Activated B cell treated with CpG ODN at 0.5 μM for 24 hours (primary cell): ENCODE measurements at regions of chr6 and their contacts with region 1.

Region 1: GRCh38 chr6:35731736-35732532 is 4.9 kb upstream of the ARMC12 start:
- DNase-seq: peak; percentile 93
- ATAC-seq: peak; percentile 69
- H3K4me3 Mint-ChIP-seq: peak overlapping the region; percentile 90
- H3K27ac Mint-ChIP-seq: peak overlapping the region; percentile 93
- H3K4me1 Mint-ChIP-seq: peaks cover 62% of the 10 kb centered on the region
- H3K27me3 Mint-ChIP-seq: no peaks in the 10 kb centered on the region
- CTCF ChIP-seq: no peak

Region 2: GRCh38 chr6:35071347-35071994 is 660.5 kb before region 1 on chr6:
- CTCF ChIA-PET with region 1: no interaction called
- POLR2A ChIA-PET with region 1: no interaction called
- intact Hi-C with region 1: no loop called
- DNase-seq: no peak
- ATAC-seq: no peak
- H3K4me3 Mint-ChIP-seq: no peak overlapping the region
- H3K27ac Mint-ChIP-seq: no peak overlapping the region
- H3K4me1 Mint-ChIP-seq: no peaks in the 10 kb centered on the region
- H3K27me3 Mint-ChIP-seq: no peaks in the 10 kb centered on the region
- CTCF ChIP-seq: no peak

Region 3: GRCh38 chr6:35297601-35298481 is 434.1 kb before region 1 on chr6 and contains the start of gene DEF6:
- CTCF ChIA-PET with region 1: interaction called, 4 read pairs
- POLR2A ChIA-PET with region 1: no interaction called
- intact Hi-C with region 1: loop called (anchors 1 kb)
- DNase-seq: peak; percentile 74
- ATAC-seq: peak; percentile 78
- H3K4me3 Mint-ChIP-seq: peak within 1 kb of the TSS; percentile 85
- H3K27ac Mint-ChIP-seq: peak within 1 kb of the TSS; percentile 97
- H3K4me1 Mint-ChIP-seq: peaks cover 56% of the 10 kb centered on the region
- H3K27me3 Mint-ChIP-seq: no peaks in the 10 kb centered on the region
- CTCF ChIP-seq: peak; percentile 42
- total RNA-seq, gene DEF6: 68.7 and 79.9 TPM in 2 replicates

Region 4: GRCh38 chr6:35468181-35468979 is 263.6 kb before region 1 on chr6 and contains the start of gene RPL10A:
- CTCF ChIA-PET with region 1: interaction called, 4 read pairs
- POLR2A ChIA-PET with region 1: interaction called, 7 read pairs
- intact Hi-C with region 1: loop called (anchors 2 kb)
- DNase-seq: peak; percentile 87
- ATAC-seq: peak; percentile 85
- H3K4me3 Mint-ChIP-seq: peak within 1 kb of the TSS; percentile 96
- H3K27ac Mint-ChIP-seq: peak within 1 kb of the TSS; percentile 98
- H3K4me1 Mint-ChIP-seq: peaks cover 45% of the 10 kb centered on the region
- H3K27me3 Mint-ChIP-seq: no peaks in the 10 kb centered on the region
- CTCF ChIP-seq: no peak
- total RNA-seq, gene RPL10A: 2,485 and 2,644 TPM in 2 replicates

Region 5: DNA sequence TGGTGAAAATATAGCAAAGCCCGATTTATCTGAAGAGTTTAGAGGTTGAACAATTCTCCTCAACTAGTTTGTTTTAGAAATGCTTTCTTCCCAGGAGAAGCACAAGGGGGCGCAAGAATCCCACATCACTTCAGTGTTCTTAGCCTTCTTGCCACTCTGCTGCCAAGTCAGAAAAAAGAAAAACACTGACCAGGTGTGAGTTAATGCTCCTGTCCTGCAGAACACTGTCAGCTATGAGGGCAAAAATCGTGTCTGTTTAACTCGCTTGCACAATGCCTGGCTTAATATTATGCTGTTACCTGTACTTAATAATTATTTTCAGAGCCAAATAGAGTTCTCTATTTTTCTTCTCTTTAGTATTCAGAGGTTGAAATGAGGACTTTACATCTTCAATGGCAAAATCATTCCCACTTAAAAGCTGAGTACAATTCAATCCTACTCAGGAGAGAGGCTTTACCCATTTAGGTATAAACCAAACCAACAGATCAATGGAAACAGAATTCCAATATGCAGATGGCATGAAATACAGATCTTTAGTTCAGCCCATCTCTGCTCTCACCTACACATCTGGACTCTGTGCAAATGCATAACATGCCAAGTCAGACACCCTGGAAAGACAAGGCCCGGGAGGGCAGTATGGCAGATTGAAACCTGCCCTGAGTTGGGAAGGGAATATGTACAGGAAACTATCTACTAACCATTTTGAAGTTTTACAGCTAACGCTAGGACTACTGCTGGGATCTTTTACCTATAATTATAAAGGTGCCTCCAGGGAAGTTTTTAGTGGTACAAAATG is 147.8 kb before region 1 on chr6:
- CTCF ChIA-PET with region 1: interaction called, 177 read pairs
- POLR2A ChIA-PET with region 1: no interaction called
- intact Hi-C with region 1: loop called (anchors 1 kb)
- DNase-seq: peak; percentile 31
- ATAC-seq: peak; percentile 68
- H3K4me3 Mint-ChIP-seq: no peak overlapping the region
- H3K27ac Mint-ChIP-seq: no peak overlapping the region
- H3K4me1 Mint-ChIP-seq: peaks cover 10% of the 10 kb centered on the region
- H3K27me3 Mint-ChIP-seq: no peaks in the 10 kb centered on the region
- CTCF ChIP-seq: peak; percentile 70

Region 6: DNA sequence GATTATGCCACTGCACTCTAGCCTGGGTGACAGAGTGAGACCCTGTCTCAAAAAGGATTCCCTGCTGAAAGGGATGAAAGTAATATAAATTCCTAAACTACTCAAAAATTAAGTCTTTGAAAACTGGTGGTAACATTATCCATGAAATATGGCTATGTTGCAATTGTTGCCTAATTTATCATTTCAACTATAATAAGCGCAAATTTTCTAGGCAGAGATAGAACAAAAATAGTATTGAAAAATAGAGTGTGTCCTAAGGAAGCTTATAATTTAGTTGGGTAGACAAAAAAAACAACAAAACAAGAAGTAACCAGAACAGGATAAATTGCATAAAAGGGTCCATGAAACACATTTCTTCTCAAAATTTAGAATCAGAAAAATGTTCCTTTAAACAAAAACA is 111.2 kb before region 1 on chr6:
- CTCF ChIA-PET with region 1: interaction called, 15 read pairs
- POLR2A ChIA-PET with region 1: no interaction called
- intact Hi-C with region 1: no loop called
- DNase-seq: no peak
- ATAC-seq: no peak
- H3K4me3 Mint-ChIP-seq: no peak overlapping the region
- H3K27ac Mint-ChIP-seq: no peak overlapping the region
- H3K4me1 Mint-ChIP-seq: no peaks in the 10 kb centered on the region
- H3K27me3 Mint-ChIP-seq: no peaks in the 10 kb centered on the region
- CTCF ChIP-seq: no peak

Region 7: DNA sequence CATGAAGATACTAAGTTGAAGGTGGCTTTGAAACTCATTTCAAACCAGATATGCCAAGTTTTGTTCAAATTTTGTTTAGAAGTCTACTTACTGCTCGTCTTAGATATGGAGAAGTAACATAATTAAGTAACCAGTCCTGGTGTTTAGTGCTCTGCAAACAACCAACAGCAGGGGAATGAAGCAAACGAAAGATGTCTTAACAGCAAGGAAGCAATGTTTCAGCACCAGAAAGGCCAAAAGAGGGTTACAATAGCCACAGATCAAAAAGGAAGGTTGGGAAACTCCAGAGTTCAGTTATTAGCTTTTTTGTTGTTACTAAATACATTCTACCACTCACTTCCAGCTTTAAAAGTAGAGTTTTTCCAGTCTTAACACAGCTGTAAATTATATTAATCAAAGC is 118.3 kb after region 1 on chr6:
- CTCF ChIA-PET with region 1: no interaction called
- POLR2A ChIA-PET with region 1: no interaction called
- intact Hi-C with region 1: no loop called
- DNase-seq: no peak
- ATAC-seq: no peak
- H3K4me3 Mint-ChIP-seq: no peak overlapping the region
- H3K27ac Mint-ChIP-seq: no peak overlapping the region
- H3K4me1 Mint-ChIP-seq: no peaks in the 10 kb centered on the region
- H3K27me3 Mint-ChIP-seq: no peaks in the 10 kb centered on the region
- CTCF ChIP-seq: no peak

Region 8: GRCh38 chr6:35920793-35921732 is 189.1 kb after region 1 on chr6 and contains the start of gene SRPK1:
- CTCF ChIA-PET with region 1: no interaction called
- POLR2A ChIA-PET with region 1: no interaction called
- intact Hi-C with region 1: no loop called
- DNase-seq: peak; percentile 78
- ATAC-seq: peak; percentile 88
- H3K4me3 Mint-ChIP-seq: peak within 1 kb of the TSS; percentile 92
- H3K27ac Mint-ChIP-seq: peak within 1 kb of the TSS; percentile 86
- H3K4me1 Mint-ChIP-seq: peaks cover 33% of the 10 kb centered on the region
- H3K27me3 Mint-ChIP-seq: no peaks in the 10 kb centered on the region
- CTCF ChIP-seq: no peak
- total RNA-seq, gene SRPK1: 49.6 and 51.5 TPM in 2 replicates

Region 9: DNA sequence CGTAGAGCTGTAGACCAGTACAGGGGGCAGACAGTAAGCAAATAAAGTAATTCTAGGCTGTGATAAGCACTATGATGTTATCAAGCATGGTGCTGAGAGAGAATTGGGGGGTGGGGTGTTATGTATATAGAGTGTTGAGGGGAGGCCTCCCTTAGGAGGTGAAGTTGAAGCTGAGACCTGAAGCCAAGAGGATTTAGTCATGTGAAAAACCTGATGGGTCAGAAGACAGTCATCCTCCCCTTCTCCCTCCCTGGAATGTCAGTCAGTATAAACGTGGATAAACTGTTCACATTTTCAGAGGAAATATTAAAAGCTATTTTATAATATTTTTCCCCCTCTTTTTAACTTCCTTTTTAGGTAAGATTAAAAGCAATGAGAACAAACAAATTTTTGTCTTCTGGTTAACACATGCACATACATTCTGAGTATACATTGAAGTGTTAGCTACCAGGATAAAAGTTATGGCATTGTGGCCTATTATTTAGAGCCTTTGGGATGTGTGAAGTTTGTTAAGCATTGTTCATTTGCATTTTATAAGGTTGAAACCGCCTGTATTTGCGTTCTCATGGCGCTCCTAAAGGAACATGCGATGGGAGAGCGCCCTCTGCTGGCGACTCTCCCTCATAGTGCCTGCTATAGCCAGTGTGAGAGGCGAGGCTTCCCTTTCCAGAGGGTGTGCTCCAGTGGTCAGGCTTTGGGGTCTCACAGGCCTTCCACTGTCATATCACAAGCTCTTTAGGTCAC is 363.0 kb after region 1 on chr6:
- CTCF ChIA-PET with region 1: interaction called, 10 read pairs
- POLR2A ChIA-PET with region 1: no interaction called
- intact Hi-C with region 1: loop called (anchors 1 kb)
- DNase-seq: peak; percentile 70
- ATAC-seq: peak; percentile 93
- H3K4me3 Mint-ChIP-seq: no peak overlapping the region
- H3K27ac Mint-ChIP-seq: peak overlapping the region; percentile 30
- H3K4me1 Mint-ChIP-seq: peaks cover 33% of the 10 kb centered on the region
- H3K27me3 Mint-ChIP-seq: no peaks in the 10 kb centered on the region
- CTCF ChIP-seq: peak; percentile 32